ENCODE measurements at regions of chr3 and their contacts with region 1.

Region 1: DNA sequence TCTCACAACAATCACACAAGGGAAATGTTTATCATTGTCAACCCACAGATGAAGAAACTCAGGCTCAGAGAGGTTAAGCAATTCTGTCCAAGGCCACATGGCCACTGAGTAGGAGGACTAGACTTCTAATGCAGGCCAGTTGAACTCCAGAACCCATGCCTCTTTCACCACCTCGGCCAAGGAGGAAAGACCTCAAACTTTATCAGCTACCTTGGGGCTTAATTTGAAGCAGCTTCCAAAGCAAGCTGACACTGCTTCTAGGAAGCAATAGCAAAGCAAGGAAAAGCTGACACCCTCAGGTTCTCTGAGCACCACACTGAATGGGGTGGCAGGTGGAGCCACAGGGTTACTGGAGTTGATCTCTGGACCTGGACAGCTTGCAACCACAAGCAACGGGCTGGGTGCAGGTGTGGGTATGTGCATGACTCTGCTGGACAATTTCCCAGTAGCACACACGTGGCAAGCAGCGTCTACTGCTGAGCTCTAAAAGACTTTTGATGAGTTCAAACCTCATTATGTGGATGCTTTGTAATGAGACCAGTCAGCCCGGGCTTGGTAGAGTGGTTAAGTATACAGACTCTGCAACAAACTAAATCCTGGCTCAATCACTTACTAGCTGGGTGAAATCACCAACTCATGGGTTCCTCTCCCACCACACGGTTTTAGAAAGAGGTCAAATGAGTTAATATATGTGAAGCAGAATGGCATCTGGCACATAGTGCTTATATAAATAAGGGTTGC is 23.1 kb downstream of the CCNL1 start:
- DNase-seq: no peak
- H3K4me3 ChIP-seq: no peak overlapping the region
- H3K27ac ChIP-seq: no peak overlapping the region
- H3K4me1 ChIP-seq: no peaks in the 10 kb centered on the region
- H3K27me3 ChIP-seq: no peaks in the 10 kb centered on the region

Region 2: GRCh38 chr3:156674046-156674910 is 462.5 kb before region 1 on chr3 and contains the start of gene TIPARP:
- CTCF ChIA-PET with region 1: interaction called, 13 read pairs
- POLR2A ChIA-PET with region 1: no interaction called
- DNase-seq: peak; percentile 98 to 99 (median 99)
- H3K4me3 ChIP-seq: peak within 1 kb of the TSS; percentile 84 to 99 (median 91)
- H3K27ac ChIP-seq: peak within 1 kb of the TSS; percentile 97
- H3K4me1 ChIP-seq: peaks cover 12 to 24% (median 17%) of the 10 kb centered on the region in 4 experiments
- H3K27me3 ChIP-seq: no peaks in the 10 kb centered on the region

Region 3: DNA sequence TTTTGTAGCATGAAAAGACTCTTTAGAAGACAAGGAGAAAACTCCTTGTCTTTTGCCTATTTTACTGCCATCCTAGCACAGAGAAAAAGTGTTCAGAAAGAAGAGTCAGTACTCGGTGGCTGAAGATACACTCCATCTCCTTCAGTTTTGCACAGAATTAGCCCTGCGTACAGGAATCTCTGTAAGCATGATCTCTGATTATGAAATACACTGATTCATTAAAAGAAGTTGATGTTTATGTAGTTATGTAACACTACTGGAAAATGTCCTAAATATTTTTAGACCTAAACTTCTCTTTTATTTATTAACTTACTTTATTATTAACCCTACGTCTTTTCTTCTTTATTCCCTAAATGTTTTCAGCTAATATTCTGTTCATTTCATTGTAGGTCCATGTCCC is 172.2 kb before region 1 on chr3:
- CTCF ChIA-PET with region 1: no interaction called
- POLR2A ChIA-PET with region 1: no interaction called
- DNase-seq: no peak
- H3K4me3 ChIP-seq: no peak overlapping the region
- H3K27ac ChIP-seq: no peak overlapping the region
- H3K4me1 ChIP-seq: no peaks in the 10 kb centered on the region
- H3K27me3 ChIP-seq: no peaks in the 10 kb centered on the region

Region 4: GRCh38 chr3:156997351-156997750 is 139.5 kb before region 1 on chr3:
- CTCF ChIA-PET with region 1: no interaction called
- POLR2A ChIA-PET with region 1: no interaction called
- DNase-seq: no peak
- H3K4me3 ChIP-seq: no peak overlapping the region
- H3K27ac ChIP-seq: no peak overlapping the region
- H3K4me1 ChIP-seq: no peaks in the 10 kb centered on the region
- H3K27me3 ChIP-seq: no peaks in the 10 kb centered on the region

Region 5: GRCh38 chr3:157104928-157105652 is 31.7 kb before region 1 on chr3:
- CTCF ChIA-PET with region 1: interaction called, 17 read pairs
- POLR2A ChIA-PET with region 1: no interaction called
- DNase-seq: peak; percentile 20 to 67 (median 51)
- H3K4me3 ChIP-seq: no peak overlapping the region
- H3K27ac ChIP-seq: no peak overlapping the region
- H3K4me1 ChIP-seq: peaks cover 0 to 4% (median 0%) of the 10 kb centered on the region in 4 experiments
- H3K27me3 ChIP-seq: no peaks in the 10 kb centered on the region

Region 6: DNA sequence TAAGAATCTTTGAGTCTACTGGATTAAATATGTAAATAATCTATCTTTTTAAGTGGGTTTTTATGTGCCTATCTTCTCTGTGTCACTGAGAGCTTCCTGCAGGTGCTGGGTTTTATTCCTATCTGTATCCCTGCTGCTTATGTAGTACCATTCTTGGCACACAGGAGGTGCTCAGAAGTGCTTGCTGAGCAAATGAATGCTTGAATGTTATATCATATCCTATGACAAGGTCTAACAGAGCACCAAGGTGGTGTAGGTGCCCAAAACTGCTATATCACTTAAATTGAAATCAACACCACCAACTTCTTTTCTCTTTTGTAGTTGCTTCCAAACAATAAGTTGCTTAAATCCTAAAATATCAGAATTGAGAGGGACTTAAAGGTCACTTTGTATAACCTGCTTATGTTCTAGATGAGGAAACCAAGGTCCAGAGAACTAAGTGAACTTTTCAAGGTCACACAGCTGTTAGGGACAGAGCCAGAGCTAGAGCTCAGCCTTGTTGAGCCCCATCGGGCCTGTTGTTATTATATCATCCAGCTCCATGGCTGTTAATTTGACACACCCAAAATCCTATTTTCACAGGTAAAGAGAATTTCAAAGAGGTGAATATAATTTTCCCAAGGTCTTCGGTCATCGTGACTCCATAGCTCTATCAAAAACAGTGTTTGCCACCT is 22.8 kb before region 1 on chr3:
- CTCF ChIA-PET with region 1: interaction called, 17 read pairs
- POLR2A ChIA-PET with region 1: no interaction called
- DNase-seq: no peak
- H3K4me3 ChIP-seq: no peak overlapping the region
- H3K27ac ChIP-seq: no peak overlapping the region
- H3K4me1 ChIP-seq: no peaks in the 10 kb centered on the region
- H3K27me3 ChIP-seq: peaks cover 0 to 4% (median 0%) of the 10 kb centered on the region in 5 experiments

Region 7: DNA sequence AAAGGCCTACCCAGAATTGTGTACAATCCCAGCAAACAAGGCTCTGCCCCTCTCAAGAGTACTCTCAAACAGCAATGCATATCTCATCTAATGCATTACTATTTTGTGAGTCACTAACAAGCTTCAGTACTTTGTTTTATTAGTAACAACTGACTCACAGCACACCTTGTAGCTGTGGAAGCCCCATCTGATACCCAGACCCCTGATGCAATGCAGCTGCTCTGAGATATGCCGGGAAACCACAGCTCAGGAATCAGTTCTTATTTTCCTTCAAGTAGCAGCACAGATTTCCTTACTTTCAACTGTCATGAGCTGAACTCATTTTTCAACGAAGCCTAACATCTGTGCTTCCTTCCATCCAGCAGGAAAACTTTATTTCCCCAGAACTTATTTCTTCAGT is 14.7 kb before region 1 on chr3:
- CTCF ChIA-PET with region 1: interaction called, 22 read pairs
- POLR2A ChIA-PET with region 1: no interaction called
- DNase-seq: peak in 1 of 3 donors; percentile 35
- H3K4me3 ChIP-seq: no peak overlapping the region
- H3K27ac ChIP-seq: no peak overlapping the region
- H3K4me1 ChIP-seq: peaks cover 0 to 4% (median 1%) of the 10 kb centered on the region in 4 experiments
- H3K27me3 ChIP-seq: peaks cover 0 to 35% (median 8%) of the 10 kb centered on the region in 5 experiments

Region 8: GRCh38 chr3:157148196-157148889 is 11.5 kb after region 1 on chr3:
- CTCF ChIA-PET with region 1: interaction called, 27 read pairs
- POLR2A ChIA-PET with region 1: interaction called, 7 read pairs
- DNase-seq: no peak
- H3K4me3 ChIP-seq: no peak overlapping the region
- H3K27ac ChIP-seq: no peak overlapping the region
- H3K4me1 ChIP-seq: no peaks in the 10 kb centered on the region
- H3K27me3 ChIP-seq: no peaks in the 10 kb centered on the region

Region 9: DNA sequence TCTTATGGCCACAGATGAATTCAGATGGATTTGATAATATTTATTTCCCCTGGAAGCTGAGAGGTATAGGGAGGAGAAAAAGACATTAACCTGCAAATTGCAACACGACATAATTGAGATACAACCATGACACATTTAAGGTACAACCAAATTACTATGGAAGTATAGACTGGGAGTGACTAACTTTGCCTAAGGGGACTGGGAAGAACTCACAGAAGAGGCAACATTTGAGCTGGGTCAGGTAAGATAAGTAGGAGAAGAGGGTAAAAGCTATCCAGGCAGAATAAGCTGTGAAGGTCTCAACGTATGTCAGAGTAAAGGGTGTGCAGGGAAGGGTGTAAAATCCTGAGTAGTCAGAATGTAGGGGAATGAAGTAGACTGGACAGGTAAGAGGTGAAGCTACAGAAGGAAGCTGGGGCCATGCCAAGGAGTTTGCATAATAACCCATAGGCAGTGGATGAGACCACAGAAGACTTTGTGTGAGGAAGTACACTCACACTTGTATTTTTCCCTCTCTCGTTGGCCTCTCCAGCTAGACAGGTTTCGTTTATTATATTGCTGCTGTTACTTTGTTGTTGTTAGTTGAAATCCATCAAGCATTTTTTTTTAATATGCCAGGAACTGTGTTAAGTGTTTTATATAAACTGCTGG is 271.8 kb after region 1 on chr3:
- CTCF ChIA-PET with region 1: no interaction called
- POLR2A ChIA-PET with region 1: no interaction called
- DNase-seq: peak in 2 of 3 donors; percentile 5 to 14
- H3K4me3 ChIP-seq: no peak overlapping the region
- H3K27ac ChIP-seq: no peak overlapping the region
- H3K4me1 ChIP-seq: peaks cover 0 to 5% (median 2%) of the 10 kb centered on the region in 4 experiments
- H3K27me3 ChIP-seq: no peaks in the 10 kb centered on the region

Measured in common myeloid progenitor, CD34-positive (primary cell).